WTC11 (cell line): ENCODE measurements at regions of chr11 and their contacts with region 1.

Region 1: GRCh38 chr11:66311965-66312548 is 4.8 kb downstream of the CD248 start:
- DNase-seq: peak; percentile 94
- ATAC-seq: peak; percentile 55
- H3K4me3 Mint-ChIP-seq: peak overlapping the region; percentile 87
- H3K27ac Mint-ChIP-seq: peak overlapping the region; percentile 99
- H3K4me1 Mint-ChIP-seq: peaks cover 13% of the 10 kb centered on the region
- H3K27me3 Mint-ChIP-seq: peaks cover 8% of the 10 kb centered on the region
- CTCF ChIP-seq: no peak; the same call in 1 of the 2 replicates

Region 2: DNA sequence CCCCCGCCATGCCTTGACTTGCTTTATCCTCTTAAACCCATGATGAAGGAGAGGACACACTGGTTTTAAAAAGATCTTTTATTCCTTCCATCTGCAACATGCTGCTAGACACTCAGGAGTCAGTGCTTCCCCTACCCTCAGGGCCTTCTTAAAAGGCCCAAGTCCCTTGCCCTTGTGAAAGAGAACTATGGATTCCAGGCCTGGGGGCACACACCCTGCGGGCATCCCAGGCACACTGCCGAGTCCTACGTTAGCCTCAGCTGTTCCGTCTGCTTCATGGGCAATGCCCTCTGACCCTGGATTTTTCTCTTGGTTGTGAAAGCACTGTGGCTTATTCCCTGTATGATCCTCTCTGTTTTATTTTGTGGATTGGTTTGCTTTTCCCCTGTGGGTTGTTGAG is 78.8 kb before region 1 on chr11:
- CTCF ChIA-PET with region 1: no interaction called
- POLR2A ChIA-PET with region 1: no interaction called
- DNase-seq: no peak
- ATAC-seq: no peak
- H3K4me3 Mint-ChIP-seq: no peak overlapping the region
- H3K27ac Mint-ChIP-seq: no peak overlapping the region
- H3K4me1 Mint-ChIP-seq: peaks cover 16% of the 10 kb centered on the region
- H3K27me3 Mint-ChIP-seq: no peaks in the 10 kb centered on the region
- CTCF ChIP-seq: no peak

Region 3: DNA sequence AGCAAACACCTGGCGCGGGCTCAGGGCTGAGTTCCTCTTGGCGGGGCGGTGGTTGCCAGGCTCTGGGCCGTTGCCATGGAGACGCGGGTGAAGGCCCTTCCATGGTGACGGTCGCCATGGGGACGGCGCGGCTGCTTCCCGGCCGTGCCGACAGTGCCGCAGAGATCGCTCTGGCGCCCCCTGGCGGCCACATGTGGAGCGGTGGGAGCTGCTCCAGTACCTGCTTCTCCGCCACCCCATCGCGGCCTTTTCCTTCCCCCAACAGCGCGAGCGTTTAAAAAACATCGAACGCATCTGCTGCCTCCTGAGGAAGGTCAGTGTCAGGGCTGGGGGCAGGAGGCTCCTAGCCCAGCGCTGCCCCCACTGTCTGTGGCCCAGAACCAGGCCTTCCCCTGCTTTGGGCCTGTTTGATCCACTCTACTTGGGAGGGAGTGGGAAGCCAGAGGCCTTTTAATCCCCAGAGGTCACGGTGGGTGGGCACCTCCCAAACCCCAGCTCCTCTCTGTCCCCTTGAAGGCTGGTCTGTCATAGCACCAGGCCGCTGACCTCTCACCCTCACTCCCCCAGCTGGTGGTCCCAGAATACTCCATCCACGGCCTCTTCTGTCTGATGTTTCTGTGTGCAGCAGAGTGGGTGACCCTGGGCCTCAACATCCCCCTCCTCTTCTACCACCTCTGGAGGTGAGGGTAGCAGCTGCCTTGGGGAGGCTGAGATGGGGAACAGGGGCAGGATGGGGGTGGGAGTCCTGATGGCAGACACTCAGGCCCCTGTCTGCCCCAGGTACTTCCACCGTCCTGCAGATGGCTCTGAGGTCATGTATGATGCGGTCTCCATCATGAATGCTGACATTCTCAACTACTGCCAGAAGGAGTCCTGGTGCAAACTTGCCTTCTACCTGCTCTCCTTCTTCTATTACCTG is 29.3 kb before region 1 on chr11:
- CTCF ChIA-PET with region 1: interaction called, 23 read pairs
- POLR2A ChIA-PET with region 1: no interaction called
- DNase-seq: peak; percentile 100
- ATAC-seq: peak; percentile 79
- H3K4me3 Mint-ChIP-seq: no peak overlapping the region; the same call in 1 of the 2 replicates
- H3K27ac Mint-ChIP-seq: 0 out of 2 replicates have a peak overlapping the region, but pooled peaks have one; percentile 15
- H3K4me1 Mint-ChIP-seq: peaks cover 24% of the 10 kb centered on the region
- H3K27me3 Mint-ChIP-seq: peaks cover 22% of the 10 kb centered on the region
- CTCF ChIP-seq: peak; percentile 98

Region 4: DNA sequence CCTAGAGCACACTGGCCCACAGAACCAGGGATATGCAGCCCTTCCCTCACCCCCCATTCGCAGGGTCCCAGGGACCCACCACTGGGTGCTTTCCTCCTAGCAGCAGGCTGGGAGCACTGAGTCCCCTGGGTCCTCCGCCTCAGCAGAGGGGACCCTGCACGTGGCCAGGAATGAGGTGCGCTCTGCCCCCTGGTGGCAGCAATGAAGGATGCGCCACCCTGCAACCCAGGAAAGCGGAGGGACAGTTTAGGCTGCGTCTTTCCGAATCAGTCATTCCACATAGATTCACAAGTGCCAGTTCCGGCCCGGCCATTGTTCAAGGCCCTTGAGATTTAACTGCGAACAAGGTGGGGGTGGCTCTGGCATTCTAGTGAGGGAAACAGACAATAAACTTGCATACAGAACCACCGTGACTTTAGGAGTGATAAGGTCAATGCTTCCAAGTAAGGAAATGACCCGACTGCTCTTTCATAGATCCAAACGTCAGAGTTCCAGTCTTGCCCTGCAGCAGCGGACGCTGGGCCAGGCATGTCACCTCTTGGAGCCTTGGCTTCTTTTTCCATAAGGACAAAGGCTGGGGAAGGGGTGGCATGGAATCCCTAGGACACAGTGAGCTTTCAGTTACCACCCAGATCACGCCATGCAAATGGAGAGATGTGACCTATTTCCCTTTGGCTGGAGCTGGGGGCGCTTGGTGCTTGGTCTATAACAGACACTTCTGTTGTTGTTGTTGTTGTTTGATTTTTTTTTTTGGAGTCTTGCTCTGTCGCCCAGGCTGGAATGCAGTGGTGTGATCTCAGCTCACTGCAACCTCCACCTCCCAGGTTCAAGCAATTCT is 16.5 kb after region 1 on chr11:
- CTCF ChIA-PET with region 1: interaction called, 319 read pairs
- POLR2A ChIA-PET with region 1: interaction called, 8 read pairs
- DNase-seq: peak; percentile 85
- ATAC-seq: peak; percentile 83
- H3K4me3 Mint-ChIP-seq: peak overlapping the region; percentile 50
- H3K27ac Mint-ChIP-seq: no peak overlapping the region
- H3K4me1 Mint-ChIP-seq: peaks cover 15% of the 10 kb centered on the region
- H3K27me3 Mint-ChIP-seq: peaks cover 11% of the 10 kb centered on the region
- CTCF ChIP-seq: peak; percentile 98

Region 5: DNA sequence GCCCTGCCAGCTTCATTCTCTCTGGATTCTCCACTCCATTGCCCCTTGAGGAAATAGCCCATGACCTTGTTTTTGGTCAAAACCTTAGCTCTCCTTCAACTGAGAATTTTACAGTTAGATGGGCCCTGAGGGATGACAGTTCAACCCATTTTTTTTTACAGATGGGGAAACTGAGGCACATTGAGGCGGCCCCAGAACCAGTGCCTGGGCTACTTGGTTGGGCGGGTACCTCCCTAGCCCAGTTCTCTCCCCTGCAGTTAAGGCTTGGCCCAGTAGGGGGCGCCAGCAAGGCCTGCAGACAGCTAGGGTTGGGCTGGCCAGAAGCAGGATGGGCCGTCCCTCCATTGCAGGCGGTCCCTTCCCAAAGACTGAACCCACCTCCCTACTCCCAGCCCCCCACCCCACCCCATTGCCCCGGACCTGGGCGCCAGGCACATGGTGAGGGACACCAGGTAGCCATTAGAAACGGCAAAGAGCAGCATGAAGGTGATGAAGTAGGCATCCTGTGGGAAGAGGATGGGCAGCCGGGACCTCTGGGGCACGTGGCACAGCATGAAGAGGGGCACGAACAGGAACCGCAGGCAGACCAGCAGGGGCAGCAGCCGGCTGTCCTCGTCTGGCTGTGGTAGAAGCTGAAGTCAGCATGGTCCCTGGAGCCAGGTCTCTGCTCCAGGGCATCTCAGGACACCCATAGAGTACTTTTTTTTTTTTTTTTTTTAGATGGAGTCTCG is 51.9 kb after region 1 on chr11:
- CTCF ChIA-PET with region 1: interaction called, 38 read pairs
- POLR2A ChIA-PET with region 1: interaction called, 4 read pairs
- DNase-seq: peak; percentile 96
- ATAC-seq: peak; percentile 75
- H3K4me3 Mint-ChIP-seq: no peak overlapping the region
- H3K27ac Mint-ChIP-seq: no peak overlapping the region
- H3K4me1 Mint-ChIP-seq: peaks cover 8% of the 10 kb centered on the region
- H3K27me3 Mint-ChIP-seq: no peaks in the 10 kb centered on the region
- CTCF ChIP-seq: peak; percentile 97

Region 6: GRCh38 chr11:66438504-66439466 is 126.7 kb after region 1 on chr11 and contains the start of gene MRPL11:
- CTCF ChIA-PET with region 1: interaction called, 17 read pairs
- POLR2A ChIA-PET with region 1: no interaction called
- DNase-seq: peak; percentile 95
- ATAC-seq: peak; percentile 98
- H3K4me3 Mint-ChIP-seq: peak within 1 kb of the TSS; percentile 95
- H3K27ac Mint-ChIP-seq: peak within 1 kb of the TSS; percentile 99
- H3K4me1 Mint-ChIP-seq: peaks cover 10% of the 10 kb centered on the region
- H3K27me3 Mint-ChIP-seq: peaks cover 7% of the 10 kb centered on the region
- CTCF ChIP-seq: no peak; the same call in 1 of the 2 replicates
- total RNA-seq, gene MRPL11: 131 to 137 TPM (median 135 TPM) in 3 replicates

Region 7: GRCh38 chr11:67202045-67202444 is 890.0 kb after region 1 on chr11:
- CTCF ChIA-PET with region 1: no interaction called
- POLR2A ChIA-PET with region 1: no interaction called
- DNase-seq: no peak
- ATAC-seq: no peak
- H3K4me3 Mint-ChIP-seq: no peak overlapping the region
- H3K27ac Mint-ChIP-seq: no peak overlapping the region
- H3K4me1 Mint-ChIP-seq: peaks cover 11% of the 10 kb centered on the region
- H3K27me3 Mint-ChIP-seq: no peaks in the 10 kb centered on the region
- CTCF ChIP-seq: no peak